Ascending aorta (tissue), 2 donors: ENCODE measurements at regions of chr21 and their contacts with region 1.

Region 1: GRCh38 chr21:39388038-39388810 is 39.3 kb upstream of the HMGN1 start:
- DNase-seq: peak; percentile 35 to 94
- H3K4me3 ChIP-seq: peak overlapping the region; percentile 51 to 61
- H3K27ac ChIP-seq: peak overlapping the region; percentile 43 to 61
- H3K4me1 ChIP-seq: peaks cover 4 to 33% of the 10 kb centered on the region in 2 donors
- H3K27me3 ChIP-seq: no peaks in the 10 kb centered on the region
- CTCF ChIP-seq: peak; percentile 85 to 93 (median 92)

Region 2: DNA sequence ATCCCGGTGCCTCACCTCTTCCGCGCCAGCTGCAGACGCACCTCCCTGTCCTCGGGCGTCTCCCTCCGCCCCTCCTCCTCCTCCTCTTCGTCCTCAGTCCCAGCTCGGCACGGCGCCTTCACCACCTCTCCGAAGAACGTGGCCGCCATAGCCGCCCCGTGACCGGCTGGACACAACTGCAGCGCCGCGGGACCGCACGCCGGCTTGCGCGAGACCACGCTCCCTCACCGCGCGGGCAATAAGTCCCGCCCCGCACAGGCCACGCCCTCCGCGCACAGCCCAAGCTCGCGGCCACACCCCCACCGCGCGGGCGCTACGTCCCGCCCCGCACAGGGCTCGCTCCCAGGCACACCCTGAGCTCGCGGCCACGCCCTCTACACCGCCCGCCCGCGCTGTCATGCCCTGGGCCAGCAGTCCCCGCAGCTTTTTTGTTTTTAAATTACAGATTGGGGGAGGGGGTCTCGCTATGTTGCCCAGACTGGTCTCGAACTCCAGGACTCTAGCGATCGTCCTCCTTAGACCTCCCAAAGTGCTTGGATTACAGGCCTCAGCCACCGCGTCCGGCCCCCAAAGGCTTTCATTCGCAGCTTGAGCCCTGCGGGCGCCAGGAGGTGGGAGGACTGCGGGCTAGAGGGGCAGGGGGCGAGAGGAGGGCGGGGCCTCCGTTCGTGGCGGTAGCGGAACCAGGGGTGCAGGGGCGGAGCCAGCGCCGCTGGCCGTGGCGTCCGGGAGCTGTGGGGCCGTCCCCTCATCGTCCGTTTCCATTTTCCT is 204.8 kb before region 1 on chr21 and contains the start of gene PSMG1:
- intact Hi-C with region 1: loop called (anchors 10 kb)
- DNase-seq: peak; percentile 75 to 97
- H3K4me3 ChIP-seq: peak within 1 kb of the TSS; percentile 77 to 91
- H3K27ac ChIP-seq: peak within 1 kb of the TSS; percentile 88 to 95
- H3K4me1 ChIP-seq: peaks cover 0 to 11% of the 10 kb centered on the region in 2 donors
- H3K27me3 ChIP-seq: no peaks in the 10 kb centered on the region
- CTCF ChIP-seq: no peak
- total RNA-seq, gene PSMG1: 25.4 TPM

Region 3: GRCh38 chr21:39313571-39314142 is 74.6 kb before region 1 on chr21 and contains the start of gene BRWD1:
- intact Hi-C with region 1: loop called (anchors 1 kb)
- DNase-seq: peak in 1 of 2 donors; percentile 87
- H3K4me3 ChIP-seq: peak within 1 kb of the TSS; percentile 98 to 100
- H3K27ac ChIP-seq: peak within 1 kb of the TSS; percentile 91 to 99
- H3K4me1 ChIP-seq: peaks cover 0 to 16% of the 10 kb centered on the region in 2 donors
- H3K27me3 ChIP-seq: no peaks in the 10 kb centered on the region
- CTCF ChIP-seq: peak; percentile 25 to 54 (median 36)
- total RNA-seq, gene BRWD1: 15.4 TPM

Region 4: GRCh38 chr21:39348355-39349210 is 39.6 kb before region 1 on chr21 and contains the start of gene HMGN1:
- intact Hi-C with region 1: loop called (anchors 1 kb)
- DNase-seq: peak; percentile 25 to 87
- H3K4me3 ChIP-seq: peak within 1 kb of the TSS; percentile 72 to 82
- H3K27ac ChIP-seq: peak within 1 kb of the TSS; percentile 79 to 91
- H3K4me1 ChIP-seq: peaks cover 0 to 15% of the 10 kb centered on the region in 2 donors
- H3K27me3 ChIP-seq: no peaks in the 10 kb centered on the region
- CTCF ChIP-seq: peak in 1 of 3 experiments; percentile 22
- total RNA-seq, gene HMGN1: 22.7 TPM

Region 5: GRCh38 chr21:39445321-39446269 is 57.4 kb after region 1 on chr21 and contains the start of gene LCA5L:
- intact Hi-C with region 1: loop called (anchors 2 kb)
- DNase-seq: peak; percentile 51 to 95
- H3K4me3 ChIP-seq: peak within 1 kb of the TSS; percentile 76 to 82
- H3K27ac ChIP-seq: peak within 1 kb of the TSS; percentile 85 to 92
- H3K4me1 ChIP-seq: peaks cover 0 to 3% of the 10 kb centered on the region in 2 donors
- H3K27me3 ChIP-seq: no peaks in the 10 kb centered on the region
- CTCF ChIP-seq: peak in 1 of 3 experiments; percentile 15
- total RNA-seq, gene LCA5L: not detected